Endothelial cell of umbilical vein (primary cell): ENCODE measurements at regions of chr6 and their contacts with region 1.

Region 1: DNA sequence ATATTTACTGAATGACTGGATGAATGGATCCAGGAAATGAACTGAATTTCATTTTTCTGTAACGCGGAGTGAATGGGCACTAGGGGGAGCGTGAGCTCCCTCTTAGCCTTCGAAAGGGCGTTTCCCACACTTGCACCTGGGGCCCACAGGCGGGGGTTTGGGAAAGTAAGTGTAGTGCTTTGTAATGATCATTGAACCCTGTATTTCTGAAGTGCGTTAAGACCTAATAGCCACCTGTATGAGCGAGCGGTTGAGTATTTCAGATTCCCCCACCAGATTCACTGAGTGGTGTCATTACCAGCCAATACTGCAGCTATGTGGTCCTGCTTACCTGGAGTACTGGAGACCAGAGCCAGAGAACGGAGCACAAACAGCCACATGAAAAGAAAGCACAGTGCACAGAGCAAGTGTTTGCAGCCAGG is 10.5 kb downstream of the SYTL3 start:
- DNase-seq: no peak
- H3K4me3 ChIP-seq: no peak overlapping the region
- H3K27ac ChIP-seq: no peak overlapping the region
- H3K4me1 ChIP-seq: no peaks in the 10 kb centered on the region
- H3K27me3 ChIP-seq: peaks cover 11 to 14% of the 10 kb centered on the region in 2 experiments
- CTCF ChIP-seq: peak; percentile 44 to 64
- POLR2A ChIP-seq: no peak

Region 2: DNA sequence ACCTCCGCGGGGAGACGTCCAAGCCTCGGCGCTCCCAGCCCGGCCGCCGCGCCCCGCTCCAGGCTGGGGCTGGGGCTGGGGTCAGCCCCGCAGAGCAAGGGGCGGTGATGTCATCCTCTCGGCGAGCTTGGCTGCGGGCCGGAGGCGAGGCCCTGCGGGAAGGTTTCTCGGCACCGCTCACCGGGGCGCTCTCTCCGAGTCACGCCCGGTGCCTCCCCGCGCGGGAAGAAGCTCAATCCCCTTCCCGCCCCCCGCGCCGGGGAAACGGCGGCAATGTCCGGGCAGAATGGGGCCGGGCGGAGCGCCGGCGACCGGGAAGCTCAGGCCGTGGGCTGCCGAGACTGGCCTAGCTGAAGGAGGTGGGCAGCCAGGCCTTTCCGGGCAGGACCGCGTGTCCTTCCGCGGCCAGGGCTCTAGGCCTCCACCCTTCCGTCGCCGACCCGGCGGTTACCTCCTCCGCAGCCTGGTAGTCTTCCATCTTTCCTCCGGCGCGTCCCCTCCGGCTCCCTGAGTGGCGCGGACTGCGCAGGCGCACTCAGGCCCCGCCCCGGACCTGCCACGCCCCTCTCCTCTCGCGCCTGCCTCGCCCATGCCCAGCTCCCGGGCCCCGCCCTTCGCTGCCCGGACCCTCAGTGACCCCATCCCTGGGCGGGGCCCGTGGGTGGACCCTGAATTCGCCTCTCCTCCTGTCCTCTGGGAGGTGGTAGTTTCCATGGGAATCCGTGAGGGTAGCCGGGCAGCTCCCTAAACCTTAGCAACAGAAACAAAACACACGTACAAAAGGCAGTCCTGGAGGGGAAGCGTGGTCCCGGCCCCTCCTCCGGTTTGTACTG is 15.9 kb before region 1 on chr6 and contains the start of gene DYNLT1:
- CTCF ChIA-PET with region 1: interaction called, 21 read pairs
- POLR2A ChIA-PET with region 1: no interaction called
- dilution Hi-C with region 1: no loop called
- intact Hi-C with region 1: no loop called
- DNase-seq: peak; percentile 92
- H3K4me3 ChIP-seq: peak within 1 kb of the TSS; percentile 74 to 92 (median 85)
- H3K27ac ChIP-seq: peak within 1 kb of the TSS; percentile 92
- H3K4me1 ChIP-seq: peaks cover 28% of the 10 kb centered on the region
- H3K27me3 ChIP-seq: no peaks in the 10 kb centered on the region
- CTCF ChIP-seq: no peak
- POLR2A ChIP-seq: peak; percentile 91
- total RNA-seq, gene DYNLT1: 162 TPM in 2 replicates

Region 3: GRCh38 chr6:158649289-158650143 is 10.8 kb before region 1 on chr6 and contains the start of gene SYTL3:
- CTCF ChIA-PET with region 1: interaction called, 21 read pairs
- POLR2A ChIA-PET with region 1: no interaction called
- dilution Hi-C with region 1: no loop called
- intact Hi-C with region 1: loop called (anchors 1 kb)
- DNase-seq: peak; percentile 29
- H3K4me3 ChIP-seq: no peak within 1 kb of the TSS
- H3K27ac ChIP-seq: no peak within 1 kb of the TSS
- H3K4me1 ChIP-seq: peaks cover 7% of the 10 kb centered on the region
- H3K27me3 ChIP-seq: no peaks in the 10 kb centered on the region
- CTCF ChIP-seq: no peak
- POLR2A ChIP-seq: no peak
- total RNA-seq, gene SYTL3: 0.74 and 0.77 TPM in 2 replicates